Mammary epithelial cell (primary cell): ENCODE measurements at regions of chr1 and their contacts with region 1.

Region 1: DNA sequence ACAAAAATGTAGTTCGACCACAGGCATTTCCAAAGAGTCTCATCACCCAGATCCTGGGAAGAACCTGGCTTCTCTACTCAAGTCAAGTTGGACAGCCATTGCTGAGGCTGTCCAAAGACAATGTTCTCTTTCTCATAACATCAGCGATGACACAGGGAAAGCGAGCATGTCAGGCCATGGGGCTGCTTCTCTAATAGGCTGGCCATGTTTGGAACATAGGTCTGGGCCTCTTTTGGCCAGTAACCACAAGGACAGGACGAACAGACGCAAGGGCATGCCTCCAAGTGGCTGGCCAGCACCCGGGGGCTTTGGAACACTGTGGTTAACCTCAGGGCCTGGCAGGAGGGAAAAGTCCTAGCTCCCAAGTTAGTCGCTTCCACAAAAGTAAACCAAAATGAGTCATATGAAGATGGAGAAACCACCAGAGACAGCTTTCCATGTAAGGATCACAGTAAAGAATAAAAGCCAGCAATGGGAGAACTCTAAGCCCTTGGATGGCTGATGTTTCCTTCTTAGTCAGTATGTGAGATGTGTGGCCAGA is 80.6 kb upstream of the SLC44A3 start:
- DNase-seq: peak; percentile 95
- H3K4me3 ChIP-seq: no peak overlapping the region
- H3K27ac ChIP-seq: peak overlapping the region; percentile 65
- H3K4me1 ChIP-seq: peaks cover 67% of the 10 kb centered on the region
- H3K27me3 ChIP-seq: no peaks in the 10 kb centered on the region
- CTCF ChIP-seq: no peak

Region 2: GRCh38 chr1:94622757-94623156 is 116.8 kb before region 1 on chr1:
- CTCF ChIA-PET with region 1: no interaction called
- dilution Hi-C with region 1: no loop called
- in situ Hi-C with region 1: no loop called
- intact Hi-C with region 1: loop called (anchors 1 kb)
- DNase-seq: peak; percentile 91
- H3K4me3 ChIP-seq: no peak overlapping the region
- H3K27ac ChIP-seq: peak overlapping the region; percentile 87
- H3K4me1 ChIP-seq: peaks cover 55% of the 10 kb centered on the region
- H3K27me3 ChIP-seq: no peaks in the 10 kb centered on the region
- CTCF ChIP-seq: no peak

Region 3: GRCh38 chr1:94713472-94714141 is 26.0 kb before region 1 on chr1:
- CTCF ChIA-PET with region 1: no interaction called
- dilution Hi-C with region 1: no loop called
- in situ Hi-C with region 1: no loop called
- intact Hi-C with region 1: loop called (anchors 2 kb)
- DNase-seq: peak; percentile 98
- H3K4me3 ChIP-seq: no peak overlapping the region
- H3K27ac ChIP-seq: peak overlapping the region; percentile 73
- H3K4me1 ChIP-seq: peaks cover 31% of the 10 kb centered on the region
- H3K27me3 ChIP-seq: no peaks in the 10 kb centered on the region
- CTCF ChIP-seq: no peak

Region 4: DNA sequence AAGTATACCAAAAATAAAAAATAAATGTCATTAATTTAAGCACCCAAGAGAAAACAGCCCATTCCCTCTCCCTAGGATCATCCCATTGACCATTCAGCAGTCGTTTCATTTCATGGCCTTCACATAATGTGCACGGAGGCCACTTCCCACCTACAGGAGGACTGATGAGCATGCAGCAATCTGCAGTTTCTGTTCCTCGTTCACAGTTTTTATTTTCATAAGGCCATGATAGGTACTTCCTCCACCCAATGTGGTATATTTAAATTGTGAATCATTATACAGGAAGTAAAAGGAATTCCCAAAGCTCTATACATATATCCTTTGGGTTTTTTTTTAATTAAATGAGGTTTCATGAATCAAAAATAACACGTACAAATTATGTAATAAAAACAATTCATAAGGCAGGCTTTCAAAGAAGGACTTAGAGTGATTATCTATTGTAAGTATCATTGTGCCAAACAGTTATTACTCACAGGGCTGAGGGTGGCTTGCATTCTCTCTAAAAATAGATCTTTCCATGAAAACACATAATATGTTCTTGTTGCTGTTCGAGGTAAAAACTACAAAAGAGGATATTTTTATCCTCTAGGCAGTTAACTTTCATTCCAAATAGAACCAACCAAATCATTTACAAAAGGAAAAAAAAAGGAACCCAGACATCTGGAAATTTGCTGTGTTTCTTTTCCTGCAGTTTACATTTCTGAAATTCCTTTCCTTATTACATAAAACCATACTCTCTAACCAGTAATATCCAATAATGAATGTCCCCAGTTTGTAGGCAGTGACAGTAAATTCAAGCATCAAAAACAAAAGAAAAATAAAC is 53.1 kb after region 1 on chr1:
- CTCF ChIA-PET with region 1: no interaction called
- dilution Hi-C with region 1: loop called (anchors 5 kb)
- in situ Hi-C with region 1: no loop called
- intact Hi-C with region 1: no loop called
- DNase-seq: peak; percentile 96
- H3K4me3 ChIP-seq: peak overlapping the region in 1 of 3 experiments; percentile 16
- H3K27ac ChIP-seq: peak overlapping the region; percentile 81
- H3K4me1 ChIP-seq: peaks cover 35% of the 10 kb centered on the region
- H3K27me3 ChIP-seq: no peaks in the 10 kb centered on the region
- CTCF ChIP-seq: peak; percentile 41 to 56

Region 5: DNA sequence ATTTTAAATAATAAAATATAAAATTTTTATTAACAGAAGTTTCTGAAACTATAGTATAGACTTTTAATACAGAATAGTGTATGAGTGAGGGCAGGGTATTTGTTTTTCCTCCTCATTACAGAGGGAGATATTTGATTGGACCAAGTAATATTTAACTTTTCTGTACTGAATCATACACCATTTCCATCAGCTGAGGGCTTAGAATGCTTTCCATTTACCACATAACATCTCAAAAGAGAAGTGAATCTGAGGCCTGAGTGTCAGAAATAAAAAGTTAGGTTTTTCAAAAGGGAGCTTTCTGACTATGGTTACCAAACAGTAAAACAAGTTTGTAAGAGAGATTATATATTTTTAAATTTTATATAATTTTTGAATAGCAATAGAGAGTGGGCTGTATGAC is 407.0 kb after region 1 on chr1:
- CTCF ChIA-PET with region 1: no interaction called
- dilution Hi-C with region 1: no loop called
- in situ Hi-C with region 1: no loop called
- intact Hi-C with region 1: no loop called
- DNase-seq: no peak
- H3K4me3 ChIP-seq: no peak overlapping the region
- H3K27ac ChIP-seq: no peak overlapping the region
- H3K4me1 ChIP-seq: no peaks in the 10 kb centered on the region
- H3K27me3 ChIP-seq: no peaks in the 10 kb centered on the region
- CTCF ChIP-seq: no peak